ENCODE measurements at regions of chr17 and their contacts with region 1.

Region 1: DNA sequence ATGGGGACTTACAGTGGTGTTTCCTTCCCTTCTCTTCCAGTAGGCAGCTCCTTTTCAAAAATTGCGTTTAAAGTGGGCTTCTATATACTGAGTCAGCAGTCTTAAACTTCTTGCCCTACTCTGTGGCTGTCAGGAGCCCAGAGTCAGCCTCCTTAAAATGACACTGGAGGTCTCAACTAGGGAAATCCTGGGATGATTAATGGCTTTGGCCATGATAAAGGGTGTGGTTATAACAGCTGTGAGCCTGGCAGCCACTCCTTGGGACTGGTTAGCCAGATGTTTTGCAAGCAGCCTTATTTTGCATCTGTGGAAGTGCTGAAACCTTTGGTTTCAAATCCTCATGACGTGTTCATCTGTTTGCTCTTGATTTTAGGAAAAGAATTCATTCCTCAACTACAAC is 25.0 kb downstream of the TAC4 start:
- DNase-seq: no peak
- H3K4me3 ChIP-seq: no peak overlapping the region
- H3K27ac ChIP-seq: no peak overlapping the region
- H3K4me1 ChIP-seq: peaks cover 30% of the 10 kb centered on the region
- H3K27me3 ChIP-seq: no peaks in the 10 kb centered on the region
- CTCF ChIP-seq: no peak

Region 2: DNA sequence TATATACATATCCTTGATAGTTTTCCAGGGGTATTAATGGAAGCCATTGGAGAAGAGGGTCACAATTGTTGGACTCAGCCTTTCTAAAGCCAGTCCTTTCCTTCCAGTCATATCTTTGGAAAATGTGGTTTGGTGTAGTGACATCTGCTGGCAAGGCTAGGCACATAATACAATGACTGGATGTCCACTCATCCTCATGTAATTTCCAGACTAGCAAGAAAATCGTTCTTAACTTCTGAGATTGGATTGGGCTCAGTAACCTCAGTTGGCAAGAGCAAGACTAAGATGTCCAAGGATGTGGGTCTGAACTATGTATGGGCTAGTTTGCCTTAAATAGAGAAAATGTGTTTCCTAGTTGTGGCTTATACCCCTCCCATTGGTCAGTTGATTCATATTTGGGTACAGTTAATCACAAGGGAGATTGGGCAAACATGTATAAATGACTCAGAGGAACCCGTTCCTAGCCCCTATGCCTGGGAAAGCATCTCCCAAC is 43.0 kb before region 1 on chr17:
- CTCF ChIA-PET with region 1: no interaction called
- POLR2A ChIA-PET with region 1: no interaction called
- intact Hi-C with region 1: loop called (anchors 5 kb)
- DNase-seq: peak; percentile 42
- H3K4me3 ChIP-seq: no peak overlapping the region
- H3K27ac ChIP-seq: no peak overlapping the region
- H3K4me1 ChIP-seq: no peaks in the 10 kb centered on the region
- H3K27me3 ChIP-seq: no peaks in the 10 kb centered on the region
- CTCF ChIP-seq: peak; percentile 65